ENCODE measurements at regions of chr6 and their contacts with region 1.

Region 1: GRCh38 chr6:56595490-56596122 is 47.1 kb downstream of the DST start:
- DNase-seq: peak; percentile 31
- ATAC-seq: peak; percentile 70
- H3K4me3 ChIP-seq: no peak overlapping the region
- H3K27ac ChIP-seq: peak overlapping the region; percentile 62
- H3K4me1 ChIP-seq: peaks cover 25% of the 10 kb centered on the region
- H3K27me3 ChIP-seq: no peaks in the 10 kb centered on the region
- CTCF ChIP-seq: peak; percentile 62 to 70 (median 68)
- EP300 ChIP-seq: no peak
- POLR2A ChIP-seq: no peak
- RAD21 ChIP-seq: peak; percentile 28

Region 2: DNA sequence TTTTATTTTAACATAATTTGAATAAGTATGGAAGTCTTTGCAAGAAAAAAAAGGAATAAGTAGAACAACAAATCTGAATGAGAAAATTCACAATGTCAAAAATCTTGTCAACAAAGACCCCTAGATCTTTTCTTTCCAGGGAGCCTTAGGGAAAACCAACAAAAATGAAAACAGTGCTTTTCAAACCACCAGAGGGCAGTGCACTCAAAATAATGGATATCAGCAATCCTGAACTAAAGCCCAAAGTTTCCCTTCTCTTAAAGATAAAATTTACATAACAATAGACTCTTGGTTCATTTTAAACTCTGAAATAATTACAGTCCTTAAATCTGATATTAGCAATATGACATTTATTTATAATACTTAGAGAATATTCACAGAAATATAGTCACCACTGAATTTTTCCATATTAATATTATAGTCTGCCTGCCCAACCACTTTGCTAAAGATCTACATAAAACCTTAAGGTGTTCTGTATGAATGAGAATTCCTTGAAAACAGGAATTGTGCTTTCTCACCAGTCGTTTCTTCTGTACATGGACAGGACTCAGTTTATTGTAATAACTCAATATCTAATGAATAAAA is 614.9 kb before region 1 on chr6:
- CTCF ChIA-PET with region 1: no interaction called
- POLR2A ChIA-PET with region 1: no interaction called
- RAD21 ChIA-PET with region 1: no interaction called
- SMC1A ChIA-PET with region 1: no interaction called
- in situ Hi-C with region 1: loop called (anchors 25 kb)
- intact Hi-C with region 1: no loop called
- DNase-seq: no peak
- ATAC-seq: no peak
- H3K4me3 ChIP-seq: no peak overlapping the region
- H3K27ac ChIP-seq: no peak overlapping the region
- H3K4me1 ChIP-seq: no peaks in the 10 kb centered on the region
- H3K27me3 ChIP-seq: no peaks in the 10 kb centered on the region
- CTCF ChIP-seq: peak; percentile 32 to 42 (median 35); a peak in 4 of 6 replicates
- EP300 ChIP-seq: no peak
- POLR2A ChIP-seq: no peak
- RAD21 ChIP-seq: peak; percentile 62

Region 3: GRCh38 chr6:56370561-56371211 is 224.9 kb before region 1 on chr6:
- CTCF ChIA-PET with region 1: interaction called, 23 read pairs
- POLR2A ChIA-PET with region 1: no interaction called
- RAD21 ChIA-PET with region 1: interaction called, 16 read pairs
- SMC1A ChIA-PET with region 1: interaction called, 10 read pairs
- in situ Hi-C with region 1: no loop called
- intact Hi-C with region 1: no loop called
- DNase-seq: peak; percentile 34
- ATAC-seq: peak; percentile 88
- H3K4me3 ChIP-seq: no peak overlapping the region
- H3K27ac ChIP-seq: no peak overlapping the region
- H3K4me1 ChIP-seq: peaks cover 11% of the 10 kb centered on the region
- H3K27me3 ChIP-seq: no peaks in the 10 kb centered on the region
- CTCF ChIP-seq: no peak
- EP300 ChIP-seq: peak; percentile 24 to 27; a peak in 1 of 4 replicates
- POLR2A ChIP-seq: no peak
- RAD21 ChIP-seq: no peak

Region 4: DNA sequence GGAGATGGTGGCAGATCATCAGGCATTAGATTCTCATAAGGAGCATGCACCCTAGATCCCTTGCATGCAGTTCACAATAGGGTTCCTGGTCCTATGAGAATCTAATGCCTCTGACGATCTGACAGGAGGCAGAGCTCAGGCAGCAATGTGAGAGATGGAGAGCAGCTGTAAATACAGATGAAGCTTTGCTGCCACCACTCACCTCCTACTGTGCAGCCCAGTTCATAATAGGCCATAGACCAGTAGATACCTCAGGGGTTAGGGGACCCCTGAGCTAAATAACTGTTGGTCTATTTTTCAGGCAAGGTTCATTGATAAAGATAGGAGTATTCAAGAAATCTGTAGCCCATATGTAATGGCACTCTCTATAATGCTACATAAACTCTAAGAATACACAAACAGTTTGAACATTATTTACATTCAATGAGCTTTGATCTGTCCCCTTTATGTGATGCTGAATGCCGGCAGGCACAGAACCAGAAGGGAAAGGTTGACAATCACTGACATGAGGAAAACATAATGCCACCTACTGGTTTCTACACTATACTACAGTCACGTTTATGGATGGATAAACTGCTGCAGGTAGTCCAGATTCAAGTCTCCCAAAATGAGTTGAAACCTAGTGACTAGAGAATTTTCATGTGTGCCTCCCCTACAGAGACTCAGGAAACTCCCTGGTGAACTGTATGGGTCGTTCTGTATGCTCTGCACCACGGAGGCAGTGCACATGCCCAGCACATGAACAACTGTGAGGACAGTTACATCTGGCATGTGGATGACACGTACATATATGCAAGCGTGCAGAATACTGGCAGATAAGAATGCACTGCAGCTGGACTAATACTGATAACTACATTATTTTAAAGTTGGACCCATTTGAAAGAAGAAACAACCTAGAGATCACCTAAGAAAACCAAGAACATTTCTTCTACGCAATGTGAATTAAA is 24.9 kb before region 1 on chr6:
- CTCF ChIA-PET with region 1: interaction called, 39 read pairs
- POLR2A ChIA-PET with region 1: interaction called, 5 read pairs
- RAD21 ChIA-PET with region 1: interaction called, 22 read pairs
- SMC1A ChIA-PET with region 1: interaction called, 16 read pairs
- in situ Hi-C with region 1: no loop called
- intact Hi-C with region 1: no loop called
- DNase-seq: no peak
- ATAC-seq: peak; percentile 88
- H3K4me3 ChIP-seq: no peak overlapping the region
- H3K27ac ChIP-seq: no peak overlapping the region
- H3K4me1 ChIP-seq: no peaks in the 10 kb centered on the region
- H3K27me3 ChIP-seq: no peaks in the 10 kb centered on the region
- CTCF ChIP-seq: peak; percentile 50 to 51 (median 51)
- EP300 ChIP-seq: no peak
- POLR2A ChIP-seq: no peak
- RAD21 ChIP-seq: 0 out of 2 replicates have a peak, but pooled peaks have one; percentile 30

Region 5: GRCh38 chr6:56624046-56624727 is 28.6 kb after region 1 on chr6:
- CTCF ChIA-PET with region 1: interaction called, 16 read pairs
- POLR2A ChIA-PET with region 1: interaction called, 4 read pairs
- RAD21 ChIA-PET with region 1: no interaction called
- SMC1A ChIA-PET with region 1: interaction called, 4 read pairs
- in situ Hi-C with region 1: no loop called
- intact Hi-C with region 1: no loop called
- DNase-seq: no peak
- ATAC-seq: no peak
- H3K4me3 ChIP-seq: no peak overlapping the region
- H3K27ac ChIP-seq: no peak overlapping the region
- H3K4me1 ChIP-seq: no peaks in the 10 kb centered on the region
- H3K27me3 ChIP-seq: no peaks in the 10 kb centered on the region
- CTCF ChIP-seq: no peak
- EP300 ChIP-seq: no peak
- POLR2A ChIP-seq: no peak
- RAD21 ChIP-seq: no peak

Region 6: GRCh38 chr6:56724455-56724854 is 128.8 kb after region 1 on chr6:
- CTCF ChIA-PET with region 1: no interaction called
- POLR2A ChIA-PET with region 1: no interaction called
- RAD21 ChIA-PET with region 1: no interaction called
- SMC1A ChIA-PET with region 1: no interaction called
- in situ Hi-C with region 1: no loop called
- intact Hi-C with region 1: no loop called
- DNase-seq: no peak
- ATAC-seq: no peak
- H3K4me3 ChIP-seq: no peak overlapping the region
- H3K27ac ChIP-seq: no peak overlapping the region
- H3K4me1 ChIP-seq: peaks cover 7% of the 10 kb centered on the region
- H3K27me3 ChIP-seq: no peaks in the 10 kb centered on the region
- CTCF ChIP-seq: no peak
- EP300 ChIP-seq: no peak
- POLR2A ChIP-seq: no peak
- RAD21 ChIP-seq: no peak

Region 7: GRCh38 chr6:56757588-56757984 is 162.0 kb after region 1 on chr6:
- CTCF ChIA-PET with region 1: interaction called, 31 read pairs
- POLR2A ChIA-PET with region 1: no interaction called
- RAD21 ChIA-PET with region 1: no interaction called
- SMC1A ChIA-PET with region 1: interaction called, 14 read pairs
- in situ Hi-C with region 1: no loop called
- intact Hi-C with region 1: no loop called
- DNase-seq: no peak
- ATAC-seq: peak; percentile 52
- H3K4me3 ChIP-seq: no peak overlapping the region
- H3K27ac ChIP-seq: peak overlapping the region; percentile 54
- H3K4me1 ChIP-seq: peaks cover 76% of the 10 kb centered on the region
- H3K27me3 ChIP-seq: no peaks in the 10 kb centered on the region
- CTCF ChIP-seq: peak; percentile 42 to 49 (median 43); a peak in 5 of 6 replicates
- EP300 ChIP-seq: no peak
- POLR2A ChIP-seq: no peak
- RAD21 ChIP-seq: peak; percentile 75